ENCODE measurements at regions of chr22 and their contacts with region 1.

Region 1: GRCh38 chr22:37457093-37457893 is 28.9 kb downstream of the MFNG start:
- DNase-seq: peak; percentile 60
- H3K4me3 ChIP-seq: no peak overlapping the region
- H3K27ac ChIP-seq: no peak overlapping the region
- H3K4me1 ChIP-seq: peaks cover 24% of the 10 kb centered on the region
- H3K27me3 ChIP-seq: no peaks in the 10 kb centered on the region
- CTCF ChIP-seq: peak; percentile 93 to 94
- POLR2A ChIP-seq: no peak

Region 2: DNA sequence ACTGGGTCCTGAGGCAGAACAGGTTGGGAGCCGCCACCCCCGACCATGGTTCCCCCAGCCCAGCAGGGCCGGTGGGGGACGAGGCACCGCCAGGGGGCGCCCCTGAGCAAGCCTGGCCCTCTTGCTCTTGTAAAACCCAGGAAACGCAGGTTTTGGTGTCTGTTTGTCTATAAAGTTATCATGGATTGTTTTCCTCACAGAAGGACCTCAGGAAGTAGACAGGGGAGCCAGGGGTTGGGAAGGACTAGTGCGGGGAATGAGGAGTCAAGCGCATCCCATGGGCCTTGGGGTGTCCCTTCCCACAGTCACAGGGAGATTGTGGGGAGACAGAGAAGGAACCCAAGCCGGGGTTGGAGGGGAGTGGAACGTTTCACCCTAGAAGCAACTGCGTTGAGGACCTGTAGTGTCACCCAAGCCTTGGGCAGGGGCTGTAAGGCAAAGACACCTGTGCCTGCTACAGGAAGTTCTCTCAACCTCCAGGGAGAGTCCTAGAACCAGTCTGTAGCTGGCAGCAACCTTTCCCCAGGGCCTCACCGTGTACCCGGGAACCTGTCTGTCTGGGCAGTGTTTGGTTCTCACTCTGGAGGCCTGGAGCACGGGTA is 379.3 kb before region 1 on chr22:
- CTCF ChIA-PET with region 1: no interaction called
- POLR2A ChIA-PET with region 1: no interaction called
- dilution Hi-C with region 1: no loop called
- intact Hi-C with region 1: loop called (anchors 2 kb)
- DNase-seq: peak; percentile 38
- H3K4me3 ChIP-seq: no peak overlapping the region
- H3K27ac ChIP-seq: no peak overlapping the region
- H3K4me1 ChIP-seq: peaks cover 9% of the 10 kb centered on the region
- H3K27me3 ChIP-seq: peaks cover 0 to 6% of the 10 kb centered on the region in 2 experiments
- CTCF ChIP-seq: peak; percentile 98 to 99
- POLR2A ChIP-seq: no peak

Region 3: DNA sequence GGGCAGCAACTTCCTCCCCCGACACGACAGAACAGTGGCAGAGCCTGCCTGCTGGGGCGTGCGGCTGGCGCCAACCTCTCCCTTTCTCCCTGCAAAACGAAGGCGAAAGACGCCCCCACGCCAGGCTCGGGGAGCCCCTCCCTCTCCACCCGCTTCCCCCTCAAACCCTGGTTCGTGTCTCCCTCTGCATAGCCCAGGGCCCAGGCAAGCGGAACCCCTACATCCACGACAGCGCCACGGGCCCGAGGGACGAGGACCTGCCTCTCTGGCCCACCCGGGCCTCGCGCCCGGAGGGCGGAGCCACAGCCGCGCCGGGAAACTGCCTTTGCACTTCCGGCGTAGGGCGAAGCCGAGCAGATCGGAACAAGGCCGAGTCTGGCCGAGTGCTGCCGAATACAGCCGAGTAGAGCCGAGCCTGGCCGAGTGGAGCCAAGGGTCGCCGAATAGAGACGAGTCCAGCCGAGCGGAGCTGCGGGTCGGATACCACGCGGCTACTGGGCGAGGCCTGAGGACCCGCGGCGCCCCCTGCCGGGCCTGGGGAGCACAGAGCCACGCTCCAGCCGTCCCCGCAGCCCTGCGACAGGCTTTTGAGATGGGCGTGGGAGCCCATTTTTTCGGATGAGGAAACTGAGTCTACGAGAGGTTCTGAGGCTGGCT is 258.1 kb before region 1 on chr22:
- CTCF ChIA-PET with region 1: interaction called, 4 read pairs
- POLR2A ChIA-PET with region 1: no interaction called
- dilution Hi-C with region 1: no loop called
- intact Hi-C with region 1: loop called (anchors 1 kb)
- DNase-seq: peak; percentile 99
- H3K4me3 ChIP-seq: peak overlapping the region; percentile 39 to 56 (median 52)
- H3K27ac ChIP-seq: peak overlapping the region; percentile 71
- H3K4me1 ChIP-seq: peaks cover 28% of the 10 kb centered on the region
- H3K27me3 ChIP-seq: no peaks in the 10 kb centered on the region
- CTCF ChIP-seq: peak; percentile 99
- POLR2A ChIP-seq: peak; percentile 95

Region 4: DNA sequence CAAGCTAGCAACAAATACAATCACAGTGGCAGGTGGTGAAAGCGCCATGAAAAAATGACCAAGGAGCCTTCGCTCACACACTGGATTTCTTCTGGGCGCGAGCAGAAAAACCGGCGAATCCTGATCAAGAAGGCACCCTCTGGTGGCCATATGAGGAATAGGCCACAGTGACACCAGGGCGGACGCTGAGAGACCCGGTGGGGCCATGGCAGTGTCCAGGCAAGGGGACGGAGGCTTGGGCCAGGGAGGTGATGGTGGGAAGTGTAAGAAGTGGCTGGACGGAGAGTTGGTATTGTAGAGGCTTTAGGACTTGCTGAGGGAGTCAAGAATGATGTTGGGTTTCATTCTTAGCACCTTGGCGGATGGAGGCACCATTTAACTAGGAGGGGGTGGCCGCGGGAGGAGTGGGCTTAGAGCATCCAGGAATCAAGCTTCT is 196.4 kb before region 1 on chr22:
- CTCF ChIA-PET with region 1: interaction called, 22 read pairs
- POLR2A ChIA-PET with region 1: no interaction called
- dilution Hi-C with region 1: no loop called
- intact Hi-C with region 1: loop called (anchors 1 kb)
- DNase-seq: peak; percentile 55
- H3K4me3 ChIP-seq: no peak overlapping the region
- H3K27ac ChIP-seq: no peak overlapping the region
- H3K4me1 ChIP-seq: peaks cover 9% of the 10 kb centered on the region
- H3K27me3 ChIP-seq: no peaks in the 10 kb centered on the region
- CTCF ChIP-seq: peak; percentile 91 to 92
- POLR2A ChIP-seq: no peak

Region 5: DNA sequence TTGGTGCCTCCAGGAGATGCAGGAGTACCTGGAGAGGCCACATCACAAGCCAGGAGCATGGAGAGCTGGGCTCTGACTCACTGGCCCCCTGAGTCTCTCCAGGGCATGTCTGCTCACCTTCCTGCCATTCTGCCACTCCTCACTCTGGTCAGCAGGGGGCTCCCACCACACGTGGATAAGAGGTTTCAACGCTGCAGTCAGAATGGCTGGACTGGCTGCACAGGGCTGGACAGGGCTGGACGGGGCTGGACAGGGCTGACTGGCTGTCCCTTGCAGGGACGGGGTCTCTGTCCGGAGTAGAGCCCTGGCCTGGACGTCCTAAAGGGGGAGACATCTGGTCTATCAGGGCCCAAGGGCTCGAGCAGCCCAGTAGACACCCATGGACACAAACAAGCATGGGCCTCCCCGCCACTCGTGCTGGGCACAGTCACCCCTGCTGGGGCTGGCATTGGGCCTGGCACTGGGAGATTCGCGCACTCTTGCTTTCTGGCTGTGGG is 140.4 kb before region 1 on chr22:
- CTCF ChIA-PET with region 1: interaction called, 168 read pairs
- POLR2A ChIA-PET with region 1: no interaction called
- dilution Hi-C with region 1: no loop called
- intact Hi-C with region 1: loop called (anchors 1 kb)
- DNase-seq: peak; percentile 82
- H3K4me3 ChIP-seq: no peak overlapping the region
- H3K27ac ChIP-seq: no peak overlapping the region
- H3K4me1 ChIP-seq: peaks cover 6% of the 10 kb centered on the region
- H3K27me3 ChIP-seq: no peaks in the 10 kb centered on the region
- CTCF ChIP-seq: peak; percentile 93
- POLR2A ChIP-seq: no peak

Region 6: GRCh38 chr22:37330200-37331033 is 126.9 kb before region 1 on chr22:
- CTCF ChIA-PET with region 1: interaction called, 25 read pairs
- POLR2A ChIA-PET with region 1: no interaction called
- dilution Hi-C with region 1: no loop called
- intact Hi-C with region 1: no loop called
- DNase-seq: peak; percentile 48
- H3K4me3 ChIP-seq: no peak overlapping the region
- H3K27ac ChIP-seq: no peak overlapping the region
- H3K4me1 ChIP-seq: peaks cover 31% of the 10 kb centered on the region
- H3K27me3 ChIP-seq: peaks cover 18 to 20% of the 10 kb centered on the region in 2 experiments
- CTCF ChIP-seq: peak in 1 of 2 donors; percentile 35
- POLR2A ChIP-seq: no peak

Region 7: GRCh38 chr22:37472418-37473006 is 15.2 kb after region 1 on chr22:
- CTCF ChIA-PET with region 1: interaction called, 12 read pairs
- POLR2A ChIA-PET with region 1: no interaction called
- dilution Hi-C with region 1: no loop called
- intact Hi-C with region 1: no loop called
- DNase-seq: no peak
- H3K4me3 ChIP-seq: no peak overlapping the region
- H3K27ac ChIP-seq: no peak overlapping the region
- H3K4me1 ChIP-seq: no peaks in the 10 kb centered on the region
- H3K27me3 ChIP-seq: no peaks in the 10 kb centered on the region
- CTCF ChIP-seq: peak; percentile 49 to 71
- POLR2A ChIP-seq: no peak